Caco-2 (cell line): ENCODE measurements at regions of chr1 and their contacts with region 1.

Region 1: DNA sequence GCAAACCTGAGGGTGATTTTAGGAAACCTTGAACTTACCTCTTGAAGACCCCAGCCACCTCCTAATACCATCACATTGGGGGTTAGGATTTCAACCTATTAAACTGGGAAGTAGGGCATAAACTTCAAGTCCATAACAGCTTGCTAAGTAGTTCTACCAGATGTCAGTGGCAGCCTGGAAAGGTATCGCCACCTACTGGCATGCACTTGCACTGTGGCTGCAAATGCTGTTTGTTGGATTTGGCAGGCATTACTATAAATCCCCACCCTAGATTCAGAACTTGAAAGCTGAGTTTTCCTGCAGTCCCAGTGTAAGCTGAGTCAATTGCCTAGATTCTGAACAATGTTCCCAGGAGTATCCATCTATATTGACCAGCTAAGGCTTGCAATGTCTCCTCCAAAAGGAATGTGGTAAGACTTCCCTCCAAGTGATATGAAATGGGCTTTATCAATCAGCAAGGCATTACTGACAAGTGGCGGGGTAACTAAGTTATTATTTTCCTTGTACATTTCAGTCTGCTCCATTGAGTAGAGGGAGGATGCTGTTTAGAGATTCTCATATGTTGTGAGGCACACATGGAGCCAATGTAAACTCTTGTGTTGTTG is 474.5 kb downstream of the PTPRC start:
- DNase-seq: peak; percentile 50 to 59
- H3K4me3 ChIP-seq: no peak overlapping the region
- H3K4me3 Mint-ChIP-seq: no peak overlapping the region
- H3K27ac Mint-ChIP-seq: no peak overlapping the region
- H3K4me1 ChIP-seq: no peaks in the 10 kb centered on the region
- H3K4me1 Mint-ChIP-seq: no peaks in the 10 kb centered on the region
- H3K27me3 ChIP-seq: no peaks in the 10 kb centered on the region
- H3K27me3 Mint-ChIP-seq: peaks cover 3% of the 10 kb centered on the region
- CTCF ChIP-seq: peak; percentile 71 to 81

Region 2: GRCh38 chr1:198756470-198756869 is 356.9 kb before region 1 on chr1:
- CTCF ChIA-PET with region 1: no interaction called
- POLR2A ChIA-PET with region 1: no interaction called
- intact Hi-C with region 1: loop called (anchors 1 kb)
- DNase-seq: no peak
- H3K4me3 ChIP-seq: no peak overlapping the region
- H3K4me3 Mint-ChIP-seq: no peak overlapping the region
- H3K27ac Mint-ChIP-seq: no peak overlapping the region
- H3K4me1 ChIP-seq: no peaks in the 10 kb centered on the region
- H3K4me1 Mint-ChIP-seq: peaks cover 5% of the 10 kb centered on the region
- H3K27me3 ChIP-seq: no peaks in the 10 kb centered on the region
- H3K27me3 Mint-ChIP-seq: peaks cover 8% of the 10 kb centered on the region
- CTCF ChIP-seq: no peak

Region 3: GRCh38 chr1:198829944-198830343 is 283.4 kb before region 1 on chr1:
- CTCF ChIA-PET with region 1: no interaction called
- POLR2A ChIA-PET with region 1: no interaction called
- intact Hi-C with region 1: loop called (anchors 5 kb)
- DNase-seq: no peak
- H3K4me3 ChIP-seq: no peak overlapping the region
- H3K4me3 Mint-ChIP-seq: no peak overlapping the region
- H3K27ac Mint-ChIP-seq: no peak overlapping the region
- H3K4me1 ChIP-seq: no peaks in the 10 kb centered on the region; the same call in 1 of the 2 replicates
- H3K4me1 Mint-ChIP-seq: no peaks in the 10 kb centered on the region
- H3K27me3 ChIP-seq: no peaks in the 10 kb centered on the region
- H3K27me3 Mint-ChIP-seq: no peaks in the 10 kb centered on the region
- CTCF ChIP-seq: no peak

Region 4: DNA sequence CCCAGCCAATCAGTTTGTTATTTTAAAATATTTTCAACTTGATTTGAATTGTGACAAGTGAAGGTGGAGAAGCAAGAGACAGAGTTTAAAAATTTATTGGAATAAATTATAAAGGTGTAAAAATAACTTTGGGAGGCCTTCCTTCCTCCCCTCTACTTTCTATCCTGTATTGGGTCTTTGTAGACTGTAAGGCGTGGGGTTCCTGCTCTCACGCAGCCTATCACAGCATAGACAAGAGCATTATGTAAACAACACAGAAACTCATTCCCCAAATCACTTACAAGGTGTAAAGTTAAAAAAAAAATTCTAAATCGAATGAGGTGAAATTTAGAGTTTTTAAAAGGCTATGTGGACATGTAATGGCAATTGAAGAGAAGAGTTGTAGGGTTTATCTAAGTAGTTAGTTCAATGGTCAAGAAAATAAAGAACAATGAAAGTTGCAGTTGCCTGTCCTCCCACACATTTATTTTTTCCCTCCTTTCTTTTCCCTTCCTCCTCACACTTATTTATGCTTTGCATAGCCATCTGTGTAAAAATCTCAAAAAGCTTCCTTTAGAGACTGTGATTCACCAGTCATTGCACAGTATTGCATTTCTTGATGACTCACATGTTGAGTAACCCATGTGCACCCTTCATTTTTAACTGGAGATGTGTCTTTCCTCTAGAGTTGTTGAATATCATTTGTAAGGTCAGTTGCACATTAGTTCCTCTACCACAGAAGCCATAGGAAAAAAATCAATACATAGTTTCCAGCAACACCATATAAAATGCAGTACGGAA is 232.4 kb before region 1 on chr1:
- CTCF ChIA-PET with region 1: no interaction called
- POLR2A ChIA-PET with region 1: no interaction called
- intact Hi-C with region 1: loop called (anchors 10 kb)
- DNase-seq: peak in 1 of 2 experiments; percentile 25
- H3K4me3 ChIP-seq: no peak overlapping the region
- H3K4me3 Mint-ChIP-seq: no peak overlapping the region
- H3K27ac Mint-ChIP-seq: peak overlapping the region; percentile 8
- H3K4me1 ChIP-seq: no peaks in the 10 kb centered on the region
- H3K4me1 Mint-ChIP-seq: peaks cover 6% of the 10 kb centered on the region
- H3K27me3 ChIP-seq: no peaks in the 10 kb centered on the region
- H3K27me3 Mint-ChIP-seq: no peaks in the 10 kb centered on the region
- CTCF ChIP-seq: no peak